ENCODE measurements at regions of chr11 and their contacts with region 1.

Region 1: GRCh38 chr11:6443269-6444003 is 2.6 kb upstream of the HPX start:
- DNase-seq: peak; percentile 41 to 61 (median 54)
- H3K4me3 ChIP-seq: no peak overlapping the region
- H3K4me3 Mint-ChIP-seq: no peak overlapping the region
- H3K27ac ChIP-seq: no peak overlapping the region
- H3K27ac Mint-ChIP-seq: no peak overlapping the region
- H3K4me1 ChIP-seq: peaks cover 5 to 8% of the 10 kb centered on the region in 2 donors
- H3K4me1 Mint-ChIP-seq: no peaks in the 10 kb centered on the region
- H3K27me3 ChIP-seq: no peaks in the 10 kb centered on the region
- H3K27me3 Mint-ChIP-seq: peaks cover 0 to 3% (median 2%) of the 10 kb centered on the region in 3 donors
- CTCF ChIP-seq: peak; percentile 89

Region 2: GRCh38 chr11:6377902-6378639 is 65.4 kb before region 1 on chr11:
- intact Hi-C with region 1: loop called (anchors 2 to 5 kb)
- DNase-seq: peak; percentile 33 to 41 (median 37)
- H3K4me3 ChIP-seq: peak overlapping the region in 2 of 3 experiments; percentile 9 to 43
- H3K4me3 Mint-ChIP-seq: peak overlapping the region in 1 of 2 donors; percentile 75
- H3K27ac ChIP-seq: peak overlapping the region; percentile 18 to 58
- H3K27ac Mint-ChIP-seq: peak overlapping the region; percentile 21 to 82 (median 76)
- H3K4me1 ChIP-seq: peaks cover 11 to 16% of the 10 kb centered on the region in 2 donors
- H3K4me1 Mint-ChIP-seq: peaks cover 16% of the 10 kb centered on the region
- H3K27me3 ChIP-seq: no peaks in the 10 kb centered on the region
- H3K27me3 Mint-ChIP-seq: peaks cover 0 to 3% (median 2%) of the 10 kb centered on the region in 3 donors
- CTCF ChIP-seq: no peak

Region 3: DNA sequence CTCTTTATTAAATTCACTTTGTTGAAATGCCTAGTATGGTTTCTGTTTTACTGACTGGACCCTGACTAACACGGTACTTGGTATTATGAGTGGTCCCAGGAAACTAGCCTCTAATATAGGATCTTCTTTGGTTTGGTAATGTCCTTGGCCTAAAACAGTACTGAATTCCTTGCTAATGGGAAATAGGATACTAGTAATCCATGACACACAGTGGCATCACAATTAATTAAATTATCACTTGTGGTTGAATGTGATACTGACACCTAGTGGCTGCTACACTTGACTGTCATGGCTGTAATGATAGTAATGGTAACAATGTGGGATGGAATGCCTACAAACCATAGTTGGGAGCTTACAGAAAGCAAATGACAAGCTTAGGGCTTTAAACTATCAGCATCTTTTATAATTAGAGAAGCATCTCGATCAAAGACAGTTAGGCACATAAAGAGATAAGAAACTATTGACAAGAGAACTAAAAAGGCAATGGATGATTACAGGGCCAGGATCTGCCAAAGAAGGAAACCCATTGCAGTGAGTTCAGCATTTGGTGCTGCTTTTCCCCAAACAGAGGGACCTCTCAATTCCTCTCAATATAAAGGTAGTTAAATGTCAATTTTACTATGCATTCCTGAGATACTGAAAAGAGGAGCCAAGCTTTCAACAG is 62.3 kb after region 1 on chr11:
- intact Hi-C with region 1: loop called in 1 of 2 experiments (anchors 10 kb)
- DNase-seq: peak; percentile 18 to 42 (median 40)
- H3K4me3 ChIP-seq: no peak overlapping the region
- H3K4me3 Mint-ChIP-seq: no peak overlapping the region
- H3K27ac ChIP-seq: no peak overlapping the region
- H3K27ac Mint-ChIP-seq: no peak overlapping the region
- H3K4me1 ChIP-seq: no peaks in the 10 kb centered on the region
- H3K4me1 Mint-ChIP-seq: no peaks in the 10 kb centered on the region
- H3K27me3 ChIP-seq: no peaks in the 10 kb centered on the region
- H3K27me3 Mint-ChIP-seq: no peaks in the 10 kb centered on the region
- CTCF ChIP-seq: peak; percentile 78